GM13977 (cell line): ENCODE measurements at regions of chr22 and their contacts with region 1.

Region 1: DNA sequence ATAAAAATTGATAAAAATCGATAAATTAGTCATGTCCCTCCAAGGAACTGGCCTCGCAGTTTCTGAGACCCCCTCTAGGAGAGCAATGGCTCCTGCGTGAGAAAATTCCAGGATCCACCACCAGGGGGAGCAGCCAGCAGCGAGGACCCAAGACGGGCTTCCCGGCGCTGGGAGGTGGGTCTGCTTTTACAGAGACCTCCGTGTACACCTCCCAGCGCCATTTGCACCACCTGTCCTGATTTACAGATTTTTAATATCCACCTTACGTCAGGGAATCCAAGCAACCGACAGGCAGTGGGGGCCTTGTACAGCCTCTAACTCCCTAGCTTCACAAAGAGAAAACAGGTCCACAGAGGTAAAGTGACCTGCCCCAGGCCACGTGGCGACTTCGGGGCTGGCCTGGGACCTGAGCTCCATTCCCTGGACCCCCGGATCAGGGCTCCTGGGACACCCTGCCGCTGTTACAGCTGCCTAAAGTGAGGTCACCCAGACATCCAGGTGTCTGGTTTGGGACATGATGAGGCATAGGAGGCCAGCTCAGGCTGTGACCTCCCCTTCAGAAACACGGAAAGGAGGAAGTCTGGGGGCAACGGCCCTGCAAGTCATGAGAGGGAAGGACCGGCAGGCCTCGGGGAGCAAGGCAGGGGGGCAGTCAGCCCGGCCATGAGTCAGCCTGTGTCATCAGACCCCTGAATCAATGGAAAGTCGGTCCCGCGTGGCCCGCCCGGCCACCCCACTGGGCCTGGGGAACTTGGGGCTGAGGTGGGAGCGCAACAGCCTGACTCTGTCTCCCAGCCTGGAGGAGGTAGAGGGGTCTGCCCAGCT is 3.5 kb downstream of the OSM start:
- DNase-seq: peak; percentile 82
- CTCF ChIP-seq: peak; percentile 88

Region 2: DNA sequence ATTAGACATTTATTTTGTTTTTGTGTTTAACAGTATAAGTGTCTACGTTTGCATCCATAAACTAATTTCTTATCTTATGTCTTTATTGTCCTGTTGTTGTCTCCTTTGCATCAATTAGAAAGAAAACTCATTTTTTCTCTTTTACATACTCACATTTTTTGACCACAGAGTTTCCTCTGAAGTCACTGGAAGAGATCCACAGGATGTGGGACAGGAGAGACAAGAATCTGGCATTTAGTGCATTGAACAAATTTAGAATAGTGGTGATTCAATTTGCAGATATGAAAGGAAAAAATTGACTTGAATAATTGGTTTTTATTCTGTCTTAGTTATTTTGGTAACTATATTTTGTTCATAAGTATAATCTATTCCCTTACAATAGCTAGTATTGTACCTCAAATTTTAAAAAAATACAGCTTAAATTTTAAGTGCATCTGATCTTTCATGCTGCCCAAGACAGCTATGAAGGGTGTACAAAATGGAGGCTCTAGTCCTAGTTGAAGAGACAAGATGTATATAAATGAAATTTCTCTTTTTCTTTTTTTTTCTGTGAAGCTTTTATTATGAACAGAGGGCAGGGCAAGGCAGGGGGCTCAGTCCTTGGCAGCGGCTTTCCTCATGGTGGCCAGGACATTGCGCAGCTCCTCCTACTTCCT is 158.5 kb before region 1 on chr22:
- in situ Hi-C with region 1: loop called (anchors 10 kb)
- DNase-seq: no peak
- CTCF ChIP-seq: no peak